Pancreas (tissue), 10 donors: ENCODE measurements at regions of chr4 and their contacts with region 1.

Region 1: DNA sequence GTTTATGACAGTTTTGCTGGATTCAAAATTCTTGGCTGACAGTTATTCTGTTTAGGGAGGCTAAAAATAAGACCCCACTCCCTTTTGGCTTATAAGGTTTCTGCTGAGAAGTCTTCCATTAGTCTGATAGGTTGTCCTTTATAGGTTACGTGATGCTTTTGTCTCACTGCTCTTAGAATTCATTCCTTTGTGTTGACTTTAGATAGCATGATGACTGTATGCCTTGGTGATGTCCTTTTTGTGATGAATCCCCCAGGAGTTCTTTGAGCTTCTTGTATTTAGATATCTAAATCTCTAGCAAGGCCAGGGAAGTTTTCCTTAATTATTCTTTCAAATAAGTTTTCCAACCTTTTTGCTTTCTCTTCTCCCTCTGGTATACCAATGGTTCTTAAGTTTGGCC is 36.4 kb downstream of the DCLK2 start:
- DNase-seq: no peak
- ATAC-seq: no peak
- H3K4me3 ChIP-seq: no peak overlapping the region
- H3K27ac ChIP-seq: no peak overlapping the region
- H3K4me1 ChIP-seq: peaks cover 0 to 7% (median 3%) of the 10 kb centered on the region in 3 donors
- H3K27me3 ChIP-seq: no peaks in the 10 kb centered on the region
- CTCF ChIP-seq: no peak

Region 2: DNA sequence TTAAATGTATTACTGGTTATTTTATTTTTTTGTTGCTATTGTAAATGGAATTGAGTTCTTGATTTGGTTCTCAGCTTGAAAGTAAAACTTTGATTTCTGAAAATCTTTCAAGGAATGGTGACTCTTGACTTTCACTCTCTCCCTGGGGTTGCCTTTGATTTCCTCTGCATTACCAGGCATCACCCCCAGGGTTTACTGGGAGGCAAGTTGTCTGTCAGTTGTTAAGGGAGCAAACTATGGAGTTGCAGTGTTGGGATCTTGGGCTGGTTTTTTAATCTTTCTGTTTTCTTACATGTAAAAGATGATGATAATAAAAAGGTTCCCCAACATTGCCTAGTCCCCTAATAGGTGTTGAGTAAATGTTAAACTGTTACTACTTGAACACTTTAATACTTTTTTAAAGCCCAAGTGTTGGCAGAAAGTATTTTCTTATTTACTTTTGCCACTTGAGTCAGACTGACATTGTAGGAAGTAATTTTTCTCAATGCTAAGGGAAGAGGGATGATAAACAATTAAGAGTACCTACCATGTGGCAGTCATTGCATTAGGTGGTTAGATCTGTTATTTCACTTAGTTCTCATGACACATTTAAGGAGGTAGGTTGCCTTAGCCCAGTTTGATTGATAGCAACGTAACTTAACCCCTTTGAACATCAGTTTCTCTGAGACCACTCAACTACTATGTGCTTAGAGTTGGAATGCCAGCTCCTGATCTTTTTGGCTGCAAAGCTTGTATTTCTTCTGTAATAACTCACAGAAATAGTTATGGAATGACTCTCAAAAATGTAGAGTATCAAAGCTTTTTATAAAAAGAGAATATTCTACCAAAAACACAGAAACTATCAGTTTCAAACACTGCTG is 30.7 kb after region 1 on chr4:
- intact Hi-C with region 1: loop called in 1 of 3 experiments (anchors 5 kb)
- DNase-seq: no peak
- ATAC-seq: no peak
- H3K4me3 ChIP-seq: no peak overlapping the region
- H3K27ac ChIP-seq: no peak overlapping the region
- H3K4me1 ChIP-seq: no peaks in the 10 kb centered on the region
- H3K27me3 ChIP-seq: no peaks in the 10 kb centered on the region
- CTCF ChIP-seq: no peak